Naive thymus-derived CD4-positive, alpha-beta T cell (primary cell): ENCODE measurements at regions of chr3 and their contacts with region 1.

Region 1: DNA sequence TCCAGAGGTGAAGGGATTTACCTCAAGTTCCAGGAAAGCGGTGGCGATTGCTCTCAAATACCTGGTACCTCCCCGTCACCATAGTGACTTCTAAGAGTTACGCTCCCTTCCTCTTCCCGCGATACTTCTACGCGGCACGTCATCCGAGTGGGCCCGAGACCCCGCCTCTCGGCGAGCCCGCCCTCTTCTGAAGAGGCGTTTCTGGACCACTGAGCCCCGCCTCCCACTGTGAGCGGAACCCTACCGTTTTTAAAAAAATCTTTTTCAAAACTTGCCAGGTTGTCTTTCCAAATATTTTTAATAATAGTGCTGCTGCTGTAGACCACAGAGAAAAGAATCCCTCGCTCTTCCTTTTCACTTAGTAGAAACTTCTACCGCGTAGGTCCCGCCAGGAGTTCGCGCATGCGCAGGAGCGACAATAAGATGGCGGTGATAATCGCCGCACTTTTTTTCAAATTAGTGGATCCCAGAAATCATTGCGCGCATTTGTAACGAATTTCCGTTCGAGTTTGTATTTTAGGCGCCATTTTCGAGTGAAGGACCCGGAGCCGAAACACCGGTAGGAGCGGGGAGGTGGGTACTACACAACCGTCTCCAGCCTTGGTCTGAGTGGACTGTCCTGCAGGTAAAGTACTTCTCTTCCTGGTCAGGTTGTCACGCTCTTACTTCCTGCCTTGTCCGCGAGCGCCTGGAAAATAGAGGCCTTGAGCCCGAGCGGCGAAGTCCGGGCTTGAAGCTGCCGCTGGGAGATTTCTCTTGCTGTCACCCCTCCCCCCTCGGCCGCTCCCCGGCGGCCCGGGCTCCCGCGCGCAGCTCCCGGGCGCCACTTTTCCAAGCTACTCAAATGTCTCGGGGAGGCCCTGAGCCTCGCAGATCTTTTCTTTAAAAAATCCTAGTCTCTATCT is at the starts of genes IFT80 and SMC4:
- DNase-seq: peak; percentile 91 to 98 (median 96)
- ATAC-seq: peak; percentile 98
- H3K4me3 ChIP-seq: peak within 1 kb of the TSS; percentile 86
- H3K4me3 Mint-ChIP-seq: peak within 1 kb of the TSS; percentile 86 to 99 (median 98)
- H3K27ac ChIP-seq: peak within 1 kb of the TSS; percentile 88
- H3K27ac Mint-ChIP-seq: peak within 1 kb of the TSS; percentile 98 to 100 (median 100)
- H3K4me1 ChIP-seq: peaks cover 11 to 23% of the 10 kb centered on the region in 2 donors
- H3K4me1 Mint-ChIP-seq: peaks cover 24 to 64% (median 57%) of the 10 kb centered on the region in 7 donors
- H3K27me3 ChIP-seq: peaks cover 0 to 4% of the 10 kb centered on the region in 2 donors
- H3K27me3 Mint-ChIP-seq: peaks cover 5 to 19% (median 9%) of the 10 kb centered on the region in 5 donors
- total RNA-seq, gene IFT80: 19.6 to 36.2 (median 30.4) TPM
- total RNA-seq, gene SMC4: 37.4 to 185 (median 47.9) TPM

Region 2: DNA sequence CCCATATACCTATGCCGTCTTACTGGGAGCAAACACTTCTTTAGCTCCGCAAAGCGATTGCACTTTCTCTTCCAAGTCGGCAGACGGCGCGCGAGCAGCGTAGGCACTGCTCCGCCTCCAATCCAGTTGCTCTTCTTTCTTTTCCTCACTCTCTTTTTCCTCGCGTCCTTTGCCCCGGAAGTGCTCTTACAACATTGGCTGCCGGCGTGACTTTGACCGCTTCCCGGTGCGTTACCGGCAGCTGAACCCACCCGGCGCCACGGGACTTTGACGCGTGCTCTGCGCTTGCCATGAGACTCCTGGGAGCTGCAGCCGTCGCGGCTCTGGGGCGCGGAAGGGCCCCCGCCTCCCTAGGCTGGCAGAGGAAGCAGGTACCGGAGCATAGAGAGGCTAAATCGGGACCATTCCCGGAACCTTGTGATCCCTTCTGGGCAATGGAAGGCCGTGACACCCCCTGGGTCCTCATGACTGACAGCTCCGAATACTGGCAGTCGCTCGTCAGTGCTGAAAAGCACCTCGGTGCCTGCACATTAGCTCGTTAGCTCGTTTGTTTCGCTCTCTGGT is 1755.0 kb before region 1 on chr3 and contains the start of gene GFM1:
- CTCF ChIA-PET with region 1: no interaction called
- POLR2A ChIA-PET with region 1: no interaction called
- intact Hi-C with region 1: loop called (anchors 2 to 5 kb)
- DNase-seq: peak; percentile 76 to 92 (median 86)
- ATAC-seq: peak; percentile 98
- H3K4me3 ChIP-seq: peak within 1 kb of the TSS; percentile 98
- H3K4me3 Mint-ChIP-seq: peak within 1 kb of the TSS; percentile 87 to 98 (median 96)
- H3K27ac ChIP-seq: peak within 1 kb of the TSS; percentile 82
- H3K27ac Mint-ChIP-seq: peak within 1 kb of the TSS; percentile 63 to 96 (median 93)
- H3K4me1 ChIP-seq: peaks cover 8 to 21% of the 10 kb centered on the region in 2 donors
- H3K4me1 Mint-ChIP-seq: peaks cover 17 to 58% (median 41%) of the 10 kb centered on the region in 7 donors
- H3K27me3 ChIP-seq: no peaks in the 10 kb centered on the region
- H3K27me3 Mint-ChIP-seq: no peaks in the 10 kb centered on the region
- total RNA-seq, gene GFM1: 36.4 to 43.4 (median 41.8) TPM

Region 3: DNA sequence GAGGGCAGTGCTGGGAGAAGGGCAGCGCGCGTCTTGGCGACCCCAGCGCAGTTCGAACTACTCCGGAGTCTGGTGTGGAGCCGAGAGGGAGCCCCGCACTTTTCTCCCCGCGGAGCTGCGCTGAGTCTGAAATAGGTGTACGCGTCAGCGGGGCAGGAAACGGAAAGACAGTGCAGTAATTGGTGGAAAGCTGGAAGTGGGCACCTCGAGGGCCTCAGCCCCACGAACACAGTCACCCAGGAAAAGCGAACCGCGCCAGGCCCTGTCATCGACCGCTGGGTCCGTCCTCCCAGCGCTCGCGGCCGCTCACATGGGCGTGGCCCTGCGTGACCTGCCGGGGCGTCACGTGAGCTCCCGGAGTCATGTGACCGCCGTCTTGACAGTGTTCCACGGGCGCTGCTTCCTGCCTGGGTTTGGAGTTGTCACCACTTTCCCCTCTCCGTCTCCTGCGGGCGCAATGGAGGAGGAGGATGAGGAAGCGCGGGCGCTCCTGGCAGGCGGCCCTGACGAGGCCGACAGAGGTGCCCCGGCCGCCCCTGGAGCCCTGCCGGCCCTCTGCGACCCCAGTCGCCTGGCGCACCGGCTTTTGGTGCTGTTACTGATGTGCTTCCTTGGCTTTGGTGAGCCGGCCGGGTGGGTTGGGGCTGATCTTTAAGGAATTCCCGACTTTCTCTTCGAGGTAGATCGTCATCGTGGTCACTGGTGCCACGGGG is 1597.5 kb before region 1 on chr3 and contains the start of gene MFSD1:
- CTCF ChIA-PET with region 1: no interaction called
- POLR2A ChIA-PET with region 1: interaction called, 3 read pairs
- intact Hi-C with region 1: loop called (anchors 2 to 5 kb)
- DNase-seq: peak; percentile 73 to 91 (median 83)
- ATAC-seq: peak; percentile 94
- H3K4me3 ChIP-seq: peak within 1 kb of the TSS; percentile 88
- H3K4me3 Mint-ChIP-seq: peak within 1 kb of the TSS; percentile 84 to 93 (median 90)
- H3K27ac ChIP-seq: peak within 1 kb of the TSS; percentile 76
- H3K27ac Mint-ChIP-seq: peak within 1 kb of the TSS; percentile 58 to 98 (median 92)
- H3K4me1 ChIP-seq: peaks cover 9 to 11% of the 10 kb centered on the region in 2 donors
- H3K4me1 Mint-ChIP-seq: peaks cover 24 to 50% (median 43%) of the 10 kb centered on the region in 7 donors
- H3K27me3 ChIP-seq: no peaks in the 10 kb centered on the region
- H3K27me3 Mint-ChIP-seq: peaks cover 0 to 24% (median 0%) of the 10 kb centered on the region in 5 donors
- total RNA-seq, gene MFSD1: 24.6 to 66.0 (median 31.1) TPM

Region 4: GRCh38 chr3:160012108-160012507 is 387.3 kb before region 1 on chr3:
- CTCF ChIA-PET with region 1: no interaction called
- POLR2A ChIA-PET with region 1: no interaction called
- intact Hi-C with region 1: loop called in 1 of 2 experiments (anchors 5 kb)
- DNase-seq: no peak
- ATAC-seq: peak; percentile 60
- H3K4me3 ChIP-seq: no peak overlapping the region
- H3K4me3 Mint-ChIP-seq: peak overlapping the region in 1 of 10 donors; percentile 64
- H3K27ac ChIP-seq: no peak overlapping the region
- H3K27ac Mint-ChIP-seq: peak overlapping the region in 1 of 9 donors; percentile 83
- H3K4me1 ChIP-seq: no peaks in the 10 kb centered on the region
- H3K4me1 Mint-ChIP-seq: peaks cover 0 to 42% (median 0%) of the 10 kb centered on the region in 7 donors
- H3K27me3 ChIP-seq: no peaks in the 10 kb centered on the region
- H3K27me3 Mint-ChIP-seq: peaks cover 0 to 5% (median 0%) of the 10 kb centered on the region in 5 donors

Region 5: GRCh38 chr3:160114355-160114995 is 284.9 kb before region 1 on chr3:
- CTCF ChIA-PET with region 1: no interaction called
- POLR2A ChIA-PET with region 1: no interaction called
- intact Hi-C with region 1: no loop called
- DNase-seq: no peak
- ATAC-seq: no peak
- H3K4me3 ChIP-seq: no peak overlapping the region
- H3K4me3 Mint-ChIP-seq: no peak overlapping the region
- H3K27ac ChIP-seq: no peak overlapping the region
- H3K27ac Mint-ChIP-seq: no peak overlapping the region
- H3K4me1 ChIP-seq: no peaks in the 10 kb centered on the region
- H3K4me1 Mint-ChIP-seq: no peaks in the 10 kb centered on the region
- H3K27me3 ChIP-seq: no peaks in the 10 kb centered on the region
- H3K27me3 Mint-ChIP-seq: peaks cover 12 to 34% (median 27%) of the 10 kb centered on the region in 5 donors

Region 6: GRCh38 chr3:160140756-160141155 is 258.6 kb before region 1 on chr3:
- CTCF ChIA-PET with region 1: no interaction called
- POLR2A ChIA-PET with region 1: no interaction called
- intact Hi-C with region 1: no loop called
- DNase-seq: peak in 1 of 9 donors; percentile 24
- ATAC-seq: no peak
- H3K4me3 ChIP-seq: no peak overlapping the region
- H3K4me3 Mint-ChIP-seq: no peak overlapping the region
- H3K27ac ChIP-seq: no peak overlapping the region
- H3K27ac Mint-ChIP-seq: no peak overlapping the region
- H3K4me1 ChIP-seq: no peaks in the 10 kb centered on the region
- H3K4me1 Mint-ChIP-seq: peaks cover 0 to 2% (median 0%) of the 10 kb centered on the region in 7 donors
- H3K27me3 ChIP-seq: no peaks in the 10 kb centered on the region
- H3K27me3 Mint-ChIP-seq: peaks cover 0 to 27% (median 2%) of the 10 kb centered on the region in 5 donors

Region 7: GRCh38 chr3:160163229-160163878 is 236.0 kb before region 1 on chr3:
- CTCF ChIA-PET with region 1: no interaction called
- POLR2A ChIA-PET with region 1: no interaction called
- intact Hi-C with region 1: loop called in 1 of 2 experiments (anchors 5 kb)
- DNase-seq: peak in 4 of 9 donors; percentile 1 to 19 (median 7)
- ATAC-seq: no peak
- H3K4me3 ChIP-seq: no peak overlapping the region
- H3K4me3 Mint-ChIP-seq: no peak overlapping the region
- H3K27ac ChIP-seq: no peak overlapping the region
- H3K27ac Mint-ChIP-seq: no peak overlapping the region
- H3K4me1 ChIP-seq: no peaks in the 10 kb centered on the region
- H3K4me1 Mint-ChIP-seq: peaks cover 0 to 3% (median 0%) of the 10 kb centered on the region in 7 donors
- H3K27me3 ChIP-seq: no peaks in the 10 kb centered on the region
- H3K27me3 Mint-ChIP-seq: peaks cover 0 to 33% (median 17%) of the 10 kb centered on the region in 5 donors

Region 8: GRCh38 chr3:160413613-160414248 is 14.4 kb after region 1 on chr3:
- CTCF ChIA-PET with region 1: interaction called, 4 read pairs
- POLR2A ChIA-PET with region 1: interaction called, 3 read pairs
- intact Hi-C with region 1: loop called (anchors 1 kb)
- DNase-seq: peak; percentile 41 to 75 (median 60)
- ATAC-seq: peak; percentile 94
- H3K4me3 ChIP-seq: no peak overlapping the region
- H3K4me3 Mint-ChIP-seq: no peak overlapping the region
- H3K27ac ChIP-seq: no peak overlapping the region
- H3K27ac Mint-ChIP-seq: peak overlapping the region in 1 of 9 donors; percentile 33
- H3K4me1 ChIP-seq: no peaks in the 10 kb centered on the region
- H3K4me1 Mint-ChIP-seq: peaks cover 2 to 48% (median 9%) of the 10 kb centered on the region in 7 donors
- H3K27me3 ChIP-seq: no peaks in the 10 kb centered on the region
- H3K27me3 Mint-ChIP-seq: no peaks in the 10 kb centered on the region

Region 9: GRCh38 chr3:160434071-160434470 is 34.7 kb after region 1 on chr3:
- CTCF ChIA-PET with region 1: no interaction called
- POLR2A ChIA-PET with region 1: no interaction called
- intact Hi-C with region 1: no loop called
- DNase-seq: no peak
- ATAC-seq: no peak
- H3K4me3 ChIP-seq: no peak overlapping the region
- H3K4me3 Mint-ChIP-seq: no peak overlapping the region
- H3K27ac ChIP-seq: no peak overlapping the region
- H3K27ac Mint-ChIP-seq: no peak overlapping the region
- H3K4me1 ChIP-seq: peaks cover 0 to 5% of the 10 kb centered on the region in 2 donors
- H3K4me1 Mint-ChIP-seq: peaks cover 20 to 42% (median 33%) of the 10 kb centered on the region in 7 donors
- H3K27me3 ChIP-seq: no peaks in the 10 kb centered on the region
- H3K27me3 Mint-ChIP-seq: no peaks in the 10 kb centered on the region

Region 10: GRCh38 chr3:160754855-160755747 is 355.7 kb after region 1 on chr3:
- CTCF ChIA-PET with region 1: no interaction called
- POLR2A ChIA-PET with region 1: no interaction called
- intact Hi-C with region 1: loop called (anchors 1 kb)
- DNase-seq: peak; percentile 76 to 88 (median 85)
- ATAC-seq: peak; percentile 92
- H3K4me3 ChIP-seq: peak overlapping the region; percentile 73
- H3K4me3 Mint-ChIP-seq: peak overlapping the region; percentile 88 to 99 (median 96)
- H3K27ac ChIP-seq: peak overlapping the region; percentile 69
- H3K27ac Mint-ChIP-seq: peak overlapping the region; percentile 88 to 97 (median 94)
- H3K4me1 ChIP-seq: peaks cover 10 to 11% of the 10 kb centered on the region in 2 donors
- H3K4me1 Mint-ChIP-seq: peaks cover 27 to 36% (median 30%) of the 10 kb centered on the region in 7 donors
- H3K27me3 ChIP-seq: peaks cover 0 to 6% of the 10 kb centered on the region in 2 donors
- H3K27me3 Mint-ChIP-seq: peaks cover 5 to 41% (median 10%) of the 10 kb centered on the region in 5 donors

Region 11: DNA sequence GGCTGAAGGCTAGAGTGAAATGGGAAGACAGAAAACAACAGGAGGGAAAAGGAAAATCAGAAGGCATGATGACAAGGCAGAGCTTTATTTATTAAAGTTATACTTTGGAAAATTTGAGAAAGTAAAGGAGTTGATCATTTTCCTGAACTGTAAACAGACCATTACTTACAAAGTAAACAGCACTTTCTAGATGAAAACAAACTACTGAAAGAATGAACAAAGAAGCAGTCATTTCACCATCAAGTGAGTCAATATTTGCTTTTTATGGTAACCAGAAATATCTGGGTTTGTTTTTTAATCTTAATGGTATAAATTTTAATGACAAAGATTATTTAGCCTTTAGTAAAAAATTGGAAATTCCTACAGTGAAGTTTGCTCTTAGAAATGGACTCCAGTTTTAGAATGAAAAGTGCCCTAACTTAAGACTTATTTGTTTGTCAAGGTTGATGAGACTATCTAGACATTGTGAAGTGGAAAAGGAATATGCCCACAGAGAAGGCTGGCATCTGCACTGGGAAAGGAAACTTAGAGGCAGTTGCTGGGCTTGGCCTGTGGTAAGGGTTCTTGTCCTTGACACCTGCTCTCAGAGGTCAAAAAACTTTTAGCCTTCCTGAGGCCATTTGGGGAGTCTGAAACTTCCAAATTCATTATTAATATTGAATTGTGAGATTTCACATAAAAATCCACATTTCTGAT is 924.7 kb after region 1 on chr3:
- CTCF ChIA-PET with region 1: no interaction called
- POLR2A ChIA-PET with region 1: no interaction called
- intact Hi-C with region 1: no loop called
- DNase-seq: no peak
- ATAC-seq: no peak
- H3K4me3 ChIP-seq: no peak overlapping the region
- H3K4me3 Mint-ChIP-seq: no peak overlapping the region
- H3K27ac ChIP-seq: no peak overlapping the region
- H3K27ac Mint-ChIP-seq: no peak overlapping the region
- H3K4me1 ChIP-seq: no peaks in the 10 kb centered on the region
- H3K4me1 Mint-ChIP-seq: peaks cover 0 to 7% (median under 1%) of the 10 kb centered on the region in 7 donors
- H3K27me3 ChIP-seq: no peaks in the 10 kb centered on the region
- H3K27me3 Mint-ChIP-seq: peaks cover 0 to 54% (median 5%) of the 10 kb centered on the region in 5 donors